HepG2 (cell line): ENCODE measurements at regions of chr6 and their contacts with region 1.

Region 1: DNA sequence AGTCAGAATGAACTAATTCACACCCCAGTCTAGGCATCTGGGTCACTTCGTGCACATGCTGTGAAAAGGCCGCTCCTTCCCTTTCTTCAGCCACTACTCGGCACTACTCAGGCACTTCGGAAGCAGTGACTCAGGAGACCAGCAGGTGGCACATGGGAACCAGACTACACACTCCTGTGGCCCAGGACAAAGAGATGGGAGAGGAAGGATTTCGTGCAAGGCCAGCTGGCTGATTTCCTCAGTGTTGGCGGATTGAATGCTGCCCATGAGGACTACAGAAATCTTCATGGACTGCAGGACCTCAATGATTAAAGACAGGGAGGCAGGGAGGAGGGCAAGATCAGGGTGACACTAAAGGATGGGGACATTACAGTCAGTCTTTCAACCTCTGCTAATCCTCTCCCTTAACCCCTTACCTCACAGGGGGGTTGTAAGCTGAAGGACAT is 117.8 kb upstream of the SPACA1 start:
- DNase-seq: peak; percentile 78
- ATAC-seq: peak; percentile 99
- H3K4me3 ChIP-seq: peak overlapping the region in 2 of 3 experiments; percentile 29 to 42; a peak in 4 of 6 replicates
- H3K27ac ChIP-seq: no peak overlapping the region
- H3K4me1 ChIP-seq: peaks cover 26% of the 10 kb centered on the region
- H3K27me3 ChIP-seq: no peaks in the 10 kb centered on the region; a peak in 1 of 5 replicates
- CTCF ChIP-seq: peak; percentile 97
- EP300 ChIP-seq: no peak
- POLR2A ChIP-seq: no peak
- RAD21 ChIP-seq: peak; percentile 82

Region 2: DNA sequence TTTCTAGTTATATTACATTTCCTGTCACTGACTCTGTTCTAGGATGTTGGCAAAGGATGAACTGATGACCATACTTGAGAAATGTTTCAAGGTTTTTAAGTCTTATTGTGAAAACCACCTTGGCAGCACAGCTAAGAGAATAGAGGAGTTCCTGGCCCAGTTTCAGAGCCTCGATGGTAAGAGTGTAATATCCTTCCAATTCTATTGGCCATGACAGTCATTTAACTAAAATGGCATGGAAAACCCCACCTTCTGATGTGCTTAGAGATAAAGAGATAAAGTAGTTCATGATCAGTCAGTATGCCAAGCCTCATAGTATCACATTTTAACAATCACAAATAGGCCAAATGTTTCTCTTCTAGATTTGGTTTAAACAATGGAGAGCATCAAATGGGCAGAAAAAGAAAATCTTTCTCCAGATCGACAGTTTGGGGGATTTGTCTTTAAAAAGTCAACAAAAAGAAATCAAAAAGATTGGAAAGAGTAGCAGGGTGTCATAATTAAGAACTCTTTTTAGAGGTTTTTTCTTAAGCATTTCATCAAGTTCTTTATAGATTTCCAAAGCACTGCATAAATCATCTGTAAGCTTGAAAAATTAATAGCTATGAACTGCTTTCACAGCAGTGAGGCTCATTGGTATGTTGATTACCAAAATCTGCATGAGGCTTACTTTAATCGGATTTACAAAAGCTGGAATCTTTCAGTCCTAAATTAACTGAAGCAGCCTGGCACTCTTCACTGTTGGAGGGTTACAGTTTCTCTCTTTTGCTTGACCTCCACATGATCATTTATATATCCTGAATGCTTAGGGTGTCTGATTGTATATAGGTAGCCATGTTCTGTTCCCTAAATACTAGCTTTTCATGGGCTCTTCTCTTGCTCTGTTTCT is 276.5 kb before region 1 on chr6:
- CTCF ChIA-PET with region 1: no interaction called
- POLR2A ChIA-PET with region 1: no interaction called
- in situ Hi-C with region 1: no loop called
- intact Hi-C with region 1: no loop called
- DNase-seq: no peak
- ATAC-seq: no peak
- H3K4me3 ChIP-seq: no peak overlapping the region
- H3K27ac ChIP-seq: no peak overlapping the region
- H3K4me1 ChIP-seq: no peaks in the 10 kb centered on the region
- H3K27me3 ChIP-seq: no peaks in the 10 kb centered on the region
- CTCF ChIP-seq: no peak
- EP300 ChIP-seq: no peak
- POLR2A ChIP-seq: no peak
- RAD21 ChIP-seq: no peak

Region 3: GRCh38 chr6:88492824-88493223 is 563.0 kb after region 1 on chr6:
- CTCF ChIA-PET with region 1: no interaction called
- POLR2A ChIA-PET with region 1: no interaction called
- in situ Hi-C with region 1: no loop called
- intact Hi-C with region 1: loop called (anchors 5 kb)
- DNase-seq: peak; percentile 18
- ATAC-seq: peak; percentile 50; the same call in 2 of the 3 replicates
- H3K4me3 ChIP-seq: no peak overlapping the region
- H3K27ac ChIP-seq: no peak overlapping the region
- H3K4me1 ChIP-seq: no peaks in the 10 kb centered on the region
- H3K27me3 ChIP-seq: no peaks in the 10 kb centered on the region; a peak in 1 of 5 replicates
- CTCF ChIP-seq: peak; percentile 56
- EP300 ChIP-seq: no peak
- POLR2A ChIP-seq: no peak
- RAD21 ChIP-seq: no peak

Region 4: GRCh38 chr6:88780714-88781389 is 851.0 kb after region 1 on chr6:
- CTCF ChIA-PET with region 1: interaction called, 7 read pairs
- POLR2A ChIA-PET with region 1: no interaction called
- in situ Hi-C with region 1: no loop called
- intact Hi-C with region 1: loop called (anchors 10 kb)
- DNase-seq: peak; percentile 60
- ATAC-seq: peak; percentile 86
- H3K4me3 ChIP-seq: no peak overlapping the region
- H3K27ac ChIP-seq: no peak overlapping the region
- H3K4me1 ChIP-seq: no peaks in the 10 kb centered on the region
- H3K27me3 ChIP-seq: no peaks in the 10 kb centered on the region
- CTCF ChIP-seq: peak; percentile 81
- EP300 ChIP-seq: no peak
- POLR2A ChIP-seq: no peak
- RAD21 ChIP-seq: peak; percentile 76

Region 5: DNA sequence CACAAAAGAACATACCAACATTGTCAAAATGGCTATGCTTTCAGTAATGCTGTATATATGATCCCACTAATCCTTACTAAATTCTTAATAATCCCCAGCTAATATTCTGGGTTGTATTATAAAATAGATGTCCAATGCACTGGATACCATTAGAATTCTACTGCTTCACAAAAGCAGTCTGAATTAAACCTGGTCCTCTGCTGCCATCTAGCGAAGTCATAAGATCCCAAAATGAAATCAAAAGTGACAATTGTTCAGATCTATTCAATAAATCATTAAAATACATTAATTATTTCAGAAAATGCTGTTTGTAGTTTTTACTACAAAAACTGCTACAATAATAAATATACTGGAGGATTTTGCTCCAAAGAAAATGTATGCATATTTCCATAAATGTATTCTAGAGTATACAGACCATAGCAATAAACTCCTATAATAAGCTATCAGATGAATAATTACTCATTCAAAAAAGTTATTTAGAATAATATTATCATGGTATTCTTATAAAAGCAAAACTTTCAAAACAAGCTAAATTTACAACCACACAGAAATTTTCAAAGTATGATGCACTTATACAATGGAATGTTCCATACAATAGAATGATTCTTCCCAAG is 941.0 kb after region 1 on chr6:
- CTCF ChIA-PET with region 1: interaction called, 4 read pairs
- POLR2A ChIA-PET with region 1: no interaction called
- in situ Hi-C with region 1: loop called (anchors 25 kb)
- intact Hi-C with region 1: loop called (anchors 2 kb)
- DNase-seq: peak; percentile 50
- ATAC-seq: no peak
- H3K4me3 ChIP-seq: no peak overlapping the region
- H3K27ac ChIP-seq: no peak overlapping the region
- H3K4me1 ChIP-seq: peaks cover 23% of the 10 kb centered on the region
- H3K27me3 ChIP-seq: no peaks in the 10 kb centered on the region
- CTCF ChIP-seq: peak; percentile 65
- EP300 ChIP-seq: no peak
- POLR2A ChIP-seq: no peak
- RAD21 ChIP-seq: peak; percentile 19; the same call in 1 of the 2 replicates